Activated CD4-positive, alpha-beta memory T cell treated with anti-CD3 and anti-CD28 coated beads for 36 hours (primary cell): ENCODE measurements at regions of chr6 and their contacts with region 1.

Region 1: GRCh38 chr6:14676064-14676463 is 558.5 kb downstream of the CD83 start:
- DNase-seq: peak; percentile 35
- H3K4me3 Mint-ChIP-seq: no peak overlapping the region
- H3K27ac Mint-ChIP-seq: peak overlapping the region; percentile 80
- H3K4me1 Mint-ChIP-seq: peaks cover 43% of the 10 kb centered on the region
- H3K27me3 Mint-ChIP-seq: no peaks in the 10 kb centered on the region

Region 2: DNA sequence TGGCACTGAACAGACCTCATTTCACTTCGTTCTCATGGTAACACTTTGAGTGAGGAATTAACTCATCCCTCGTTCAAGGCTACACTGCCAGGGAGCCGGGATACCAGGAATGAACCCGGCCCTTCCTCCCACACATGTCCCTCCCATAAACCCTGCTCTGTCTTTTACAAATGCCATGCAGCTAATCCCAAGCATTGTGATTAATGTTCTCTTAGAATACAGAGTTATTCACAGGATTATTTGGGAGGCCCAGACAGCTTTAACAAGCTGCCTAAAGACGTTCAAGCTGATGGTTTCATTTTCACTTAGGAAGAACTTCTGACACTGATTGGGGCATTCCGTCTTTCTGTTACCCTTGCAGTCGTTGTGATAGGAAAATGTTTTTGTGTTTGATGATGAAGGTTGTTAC is 601.0 kb before region 1 on chr6:
- CTCF ChIA-PET with region 1: no interaction called
- POLR2A ChIA-PET with region 1: no interaction called
- intact Hi-C with region 1: loop called (anchors 5 kb)
- DNase-seq: no peak
- H3K4me3 Mint-ChIP-seq: peak overlapping the region; percentile 68
- H3K27ac Mint-ChIP-seq: peak overlapping the region; percentile 81
- H3K4me1 Mint-ChIP-seq: peaks cover 56% of the 10 kb centered on the region
- H3K27me3 Mint-ChIP-seq: no peaks in the 10 kb centered on the region

Region 3: GRCh38 chr6:14423330-14423729 is 252.7 kb before region 1 on chr6:
- CTCF ChIA-PET with region 1: no interaction called
- POLR2A ChIA-PET with region 1: no interaction called
- intact Hi-C with region 1: loop called (anchors 1 kb)
- DNase-seq: no peak
- H3K4me3 Mint-ChIP-seq: no peak overlapping the region
- H3K27ac Mint-ChIP-seq: peak overlapping the region; percentile 73
- H3K4me1 Mint-ChIP-seq: peaks cover 46% of the 10 kb centered on the region
- H3K27me3 Mint-ChIP-seq: no peaks in the 10 kb centered on the region

Region 4: GRCh38 chr6:14542670-14543366 is 133.2 kb before region 1 on chr6:
- CTCF ChIA-PET with region 1: no interaction called
- POLR2A ChIA-PET with region 1: no interaction called
- intact Hi-C with region 1: loop called (anchors 1 kb)
- DNase-seq: peak; percentile 90
- H3K4me3 Mint-ChIP-seq: no peak overlapping the region
- H3K27ac Mint-ChIP-seq: peak overlapping the region; percentile 53
- H3K4me1 Mint-ChIP-seq: peaks cover 31% of the 10 kb centered on the region
- H3K27me3 Mint-ChIP-seq: peaks cover 2% of the 10 kb centered on the region

Region 5: DNA sequence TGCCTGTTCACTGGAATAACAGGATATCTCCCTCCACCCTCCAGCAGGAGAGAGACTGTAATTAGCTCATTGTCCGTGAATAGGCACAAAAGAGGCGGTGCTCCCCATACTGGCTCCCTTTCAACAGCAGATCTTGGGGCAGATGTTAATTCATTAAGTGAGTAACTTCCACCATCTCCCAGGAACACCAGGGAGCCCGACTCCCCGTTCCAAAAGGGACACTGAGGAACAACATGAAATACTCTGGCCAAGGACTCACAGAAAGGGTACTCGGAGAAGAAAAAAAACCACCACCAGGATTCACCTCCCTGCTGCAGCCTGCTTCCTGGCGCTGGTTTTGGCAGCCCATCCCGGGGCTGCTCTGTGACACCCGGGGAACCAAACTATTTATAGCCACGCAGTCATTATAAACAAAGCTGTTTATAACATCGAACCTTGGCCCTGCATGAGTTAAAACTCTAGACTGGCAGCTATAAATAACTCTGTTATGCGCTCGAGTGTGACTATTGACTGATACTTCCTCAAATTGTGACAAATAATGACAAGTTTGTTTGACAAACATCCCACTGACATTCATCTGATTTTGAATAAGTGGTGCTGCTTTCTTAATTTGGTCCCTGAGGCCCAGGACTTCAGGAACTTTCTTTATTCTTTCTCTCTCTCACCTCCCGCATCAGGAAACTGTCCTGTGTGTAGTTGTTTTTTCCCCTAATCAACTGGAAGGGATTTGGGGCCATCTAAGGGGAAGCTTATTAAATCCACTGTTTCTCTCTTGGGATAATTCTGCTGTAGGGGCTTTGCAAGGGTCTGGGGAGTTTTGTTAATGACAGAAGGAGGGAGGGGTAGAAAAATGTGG is 36.9 kb before region 1 on chr6:
- CTCF ChIA-PET with region 1: no interaction called
- POLR2A ChIA-PET with region 1: no interaction called
- intact Hi-C with region 1: loop called (anchors 5 kb)
- DNase-seq: no peak
- H3K4me3 Mint-ChIP-seq: no peak overlapping the region
- H3K27ac Mint-ChIP-seq: no peak overlapping the region
- H3K4me1 Mint-ChIP-seq: peaks cover 57% of the 10 kb centered on the region
- H3K27me3 Mint-ChIP-seq: peaks cover 2% of the 10 kb centered on the region

Region 6: GRCh38 chr6:14660806-14661579 is 15.1 kb before region 1 on chr6:
- CTCF ChIA-PET with region 1: no interaction called
- POLR2A ChIA-PET with region 1: interaction called, 7 read pairs
- intact Hi-C with region 1: loop called (anchors 1 kb)
- DNase-seq: peak; percentile 64
- H3K4me3 Mint-ChIP-seq: no peak overlapping the region
- H3K27ac Mint-ChIP-seq: no peak overlapping the region
- H3K4me1 Mint-ChIP-seq: peaks cover 57% of the 10 kb centered on the region
- H3K27me3 Mint-ChIP-seq: no peaks in the 10 kb centered on the region

Region 7: GRCh38 chr6:14721103-14721746 is 45.2 kb after region 1 on chr6:
- CTCF ChIA-PET with region 1: no interaction called
- POLR2A ChIA-PET with region 1: no interaction called
- intact Hi-C with region 1: no loop called
- DNase-seq: no peak
- H3K4me3 Mint-ChIP-seq: no peak overlapping the region
- H3K27ac Mint-ChIP-seq: peak overlapping the region; percentile 71
- H3K4me1 Mint-ChIP-seq: peaks cover 65% of the 10 kb centered on the region
- H3K27me3 Mint-ChIP-seq: no peaks in the 10 kb centered on the region

Region 8: DNA sequence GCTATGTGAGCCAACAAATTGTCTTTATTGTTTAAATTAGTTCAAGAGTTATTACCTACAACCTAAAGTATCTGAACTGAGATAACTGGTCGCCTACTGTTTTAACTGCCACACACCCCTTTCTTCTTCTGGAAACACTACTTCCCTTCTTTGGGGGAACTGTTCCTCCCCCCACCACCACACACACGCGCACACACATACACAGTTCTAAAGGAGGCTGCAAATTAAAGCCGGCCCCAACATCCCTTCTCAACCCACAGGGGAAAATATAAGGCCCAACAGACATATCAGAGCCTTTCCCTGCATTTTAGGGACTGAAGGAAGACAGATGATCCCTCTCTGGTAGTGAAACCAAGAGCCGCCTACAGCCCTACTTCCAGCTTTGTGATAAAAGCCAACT is 221.8 kb after region 1 on chr6:
- CTCF ChIA-PET with region 1: no interaction called
- POLR2A ChIA-PET with region 1: no interaction called
- intact Hi-C with region 1: no loop called
- DNase-seq: no peak
- H3K4me3 Mint-ChIP-seq: no peak overlapping the region
- H3K27ac Mint-ChIP-seq: no peak overlapping the region
- H3K4me1 Mint-ChIP-seq: no peaks in the 10 kb centered on the region
- H3K27me3 Mint-ChIP-seq: no peaks in the 10 kb centered on the region

Region 9: GRCh38 chr6:15254070-15254841 is 578.2 kb after region 1 on chr6:
- CTCF ChIA-PET with region 1: no interaction called
- POLR2A ChIA-PET with region 1: no interaction called
- intact Hi-C with region 1: loop called (anchors 2 kb)
- DNase-seq: no peak
- H3K4me3 Mint-ChIP-seq: peak overlapping the region; percentile 96
- H3K27ac Mint-ChIP-seq: peak overlapping the region; percentile 98
- H3K4me1 Mint-ChIP-seq: peaks cover 93% of the 10 kb centered on the region
- H3K27me3 Mint-ChIP-seq: no peaks in the 10 kb centered on the region